ENCODE measurements at regions of chr2 and their contacts with region 1.

Region 1: DNA sequence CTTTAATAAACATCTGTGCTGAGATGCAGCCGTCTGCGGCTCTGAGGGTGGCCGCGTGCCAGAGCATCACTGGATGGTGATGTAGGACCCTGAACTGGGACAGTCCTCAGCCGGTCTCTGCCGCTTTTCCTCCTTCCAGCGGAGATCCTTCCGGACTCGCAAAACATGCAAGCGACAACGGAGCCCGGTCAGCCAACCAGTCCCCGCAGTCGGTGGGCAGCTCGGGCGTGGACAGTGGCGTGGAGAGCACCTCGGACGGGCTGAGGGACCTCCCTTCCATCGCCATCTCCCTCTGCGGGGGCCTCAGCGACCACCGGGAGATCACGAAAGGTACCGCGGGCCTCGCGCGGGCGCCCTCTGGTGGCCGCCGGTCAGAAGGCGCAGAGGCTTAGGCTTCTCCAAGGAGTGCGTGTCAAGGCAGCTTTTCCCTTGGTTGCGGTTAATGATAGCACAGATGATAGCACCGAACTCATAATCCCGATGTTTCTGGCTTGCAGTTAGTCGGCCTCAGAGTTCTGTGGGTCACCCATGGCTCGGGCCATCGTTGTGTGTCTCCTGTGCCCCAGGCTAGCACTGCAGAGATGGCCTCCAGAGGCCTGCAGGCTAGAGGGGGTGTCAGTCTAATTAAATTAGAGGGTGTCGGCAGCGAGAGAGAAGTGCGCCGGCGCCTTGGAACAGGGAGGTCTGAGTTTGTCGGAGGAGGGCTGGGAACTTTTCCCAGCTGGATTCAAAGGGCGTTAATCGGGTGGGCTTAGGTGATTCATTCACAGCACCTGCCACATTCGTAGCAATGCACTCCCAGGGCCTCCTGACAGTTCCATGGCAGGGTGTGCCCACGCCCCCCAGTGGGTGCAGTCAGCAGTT is 38.5 kb downstream of the LPIN1 start:
- DNase-seq: peak; percentile 21 to 45 (median 37)
- H3K4me3 ChIP-seq: no peak overlapping the region
- H3K27ac ChIP-seq: no peak overlapping the region
- H3K4me1 ChIP-seq: no peaks in the 10 kb centered on the region
- H3K27me3 ChIP-seq: no peaks in the 10 kb centered on the region

Region 2: GRCh38 chr2:11802782-11803191 is 17.8 kb after region 1 on chr2:
- CTCF ChIA-PET with region 1: interaction called, 32 read pairs
- POLR2A ChIA-PET with region 1: no interaction called
- DNase-seq: no peak
- H3K4me3 ChIP-seq: no peak overlapping the region
- H3K27ac ChIP-seq: no peak overlapping the region
- H3K4me1 ChIP-seq: peaks cover 0 to 11% (median 2%) of the 10 kb centered on the region in 4 experiments
- H3K27me3 ChIP-seq: no peaks in the 10 kb centered on the region

Region 3: GRCh38 chr2:11829324-11829946 is 44.5 kb after region 1 on chr2:
- CTCF ChIA-PET with region 1: no interaction called
- POLR2A ChIA-PET with region 1: no interaction called
- DNase-seq: peak; percentile 71 to 73 (median 72)
- H3K4me3 ChIP-seq: peak overlapping the region in 3 of 7 experiments; percentile 41 to 64 (median 55)
- H3K27ac ChIP-seq: peak overlapping the region in 1 of 2 experiments; percentile 56
- H3K4me1 ChIP-seq: peaks cover 17 to 50% (median 30%) of the 10 kb centered on the region in 4 experiments
- H3K27me3 ChIP-seq: peaks cover 0 to 33% (median 10%) of the 10 kb centered on the region in 5 experiments

Region 4: GRCh38 chr2:11842336-11842735 is 57.4 kb after region 1 on chr2:
- CTCF ChIA-PET with region 1: no interaction called
- POLR2A ChIA-PET with region 1: no interaction called
- DNase-seq: no peak
- H3K4me3 ChIP-seq: no peak overlapping the region
- H3K27ac ChIP-seq: no peak overlapping the region
- H3K4me1 ChIP-seq: no peaks in the 10 kb centered on the region
- H3K27me3 ChIP-seq: peaks cover 0 to 57% (median 16%) of the 10 kb centered on the region in 5 experiments

Region 5: DNA sequence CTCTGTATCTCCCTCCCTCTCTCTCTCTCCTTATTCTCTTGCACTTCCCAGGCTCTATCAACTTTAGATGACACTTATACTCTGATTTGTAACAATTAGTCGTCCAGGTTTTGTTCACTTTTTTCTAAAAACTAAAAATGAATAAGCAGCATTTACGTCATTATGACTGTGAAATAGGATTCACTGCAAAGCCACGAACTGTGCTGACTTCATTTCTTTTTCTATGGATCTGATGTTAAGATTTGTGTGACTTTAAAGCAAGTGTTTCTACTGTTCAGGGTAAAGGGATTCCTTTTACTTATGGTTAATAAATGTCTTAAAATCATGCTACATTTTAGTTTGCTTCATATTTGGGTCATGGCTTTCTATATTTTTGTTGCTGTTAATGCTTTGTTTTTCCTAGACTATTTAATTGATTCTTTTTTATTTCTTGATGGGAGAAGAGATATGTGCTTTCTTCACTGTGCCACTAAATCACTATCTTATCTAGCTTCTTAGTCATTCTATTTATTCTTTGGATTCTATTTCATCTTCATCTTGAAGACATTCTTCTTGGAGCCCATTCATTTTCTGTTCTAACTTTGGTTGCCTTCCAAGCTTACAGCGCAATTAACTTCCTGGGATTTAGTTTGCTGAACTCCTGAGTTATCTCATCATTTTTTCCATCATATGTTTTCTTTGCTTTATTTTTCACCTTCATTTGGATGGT is 451.3 kb after region 1 on chr2:
- CTCF ChIA-PET with region 1: no interaction called
- POLR2A ChIA-PET with region 1: no interaction called
- DNase-seq: no peak
- H3K4me3 ChIP-seq: no peak overlapping the region
- H3K27ac ChIP-seq: no peak overlapping the region
- H3K4me1 ChIP-seq: no peaks in the 10 kb centered on the region
- H3K27me3 ChIP-seq: no peaks in the 10 kb centered on the region

Measured in common myeloid progenitor, CD34-positive (primary cell).